Sigmoid colon (tissue), 7 donors: ENCODE measurements at regions of chr1 and their contacts with region 1.

Region 1: GRCh38 chr1:101025657-101026504 is at the start of gene DPH5:
- DNase-seq: peak; percentile 91
- H3K4me3 ChIP-seq: peak within 1 kb of the TSS; percentile 52 to 69 (median 61)
- H3K27ac ChIP-seq: peak within 1 kb of the TSS; percentile 76 to 85 (median 83)
- H3K4me1 ChIP-seq: peaks cover 0 to 22% (median 13%) of the 10 kb centered on the region in 4 donors
- H3K27me3 ChIP-seq: no peaks in the 10 kb centered on the region
- CTCF ChIP-seq: no peak
- EP300 ChIP-seq: no peak
- POLR2A ChIP-seq: peak; percentile 50 to 52
- total RNA-seq, gene DPH5: 24.5 to 38.5 (median 33.7) TPM

Region 2: GRCh38 chr1:100895540-100896483 is 130.1 kb before region 1 on chr1 and contains the start of gene SLC30A7:
- intact Hi-C with region 1: loop called (anchors 5 kb)
- DNase-seq: peak; percentile 96
- H3K4me3 ChIP-seq: peak within 1 kb of the TSS; percentile 60 to 85 (median 72)
- H3K27ac ChIP-seq: peak within 1 kb of the TSS; percentile 89 to 97 (median 93)
- H3K4me1 ChIP-seq: peaks cover 0 to 31% (median 18%) of the 10 kb centered on the region in 4 donors
- H3K27me3 ChIP-seq: no peaks in the 10 kb centered on the region
- CTCF ChIP-seq: no peak
- EP300 ChIP-seq: no peak
- POLR2A ChIP-seq: peak; percentile 38 to 63
- total RNA-seq, gene SLC30A7: 10.9 to 16.7 (median 14.1) TPM

Region 3: DNA sequence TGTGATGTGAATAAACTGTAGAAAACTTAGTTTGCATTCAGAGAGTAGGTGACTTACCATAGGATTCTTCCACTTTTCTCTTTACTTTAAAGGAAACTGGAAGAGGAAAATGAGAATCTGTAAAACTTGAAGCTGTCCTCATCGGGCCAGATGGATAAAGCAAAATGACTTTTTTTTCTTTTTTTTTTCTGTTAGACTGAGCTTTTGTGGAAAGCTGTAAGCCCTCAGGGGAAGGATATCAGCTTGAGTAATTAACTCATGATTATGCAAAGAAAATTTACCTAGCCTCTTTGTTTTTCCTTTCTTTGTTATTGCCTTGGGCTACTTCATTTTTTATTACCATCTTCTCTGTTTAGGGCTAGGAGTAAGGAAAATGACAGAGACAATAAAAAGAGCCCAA is 53.7 kb before region 1 on chr1:
- intact Hi-C with region 1: no loop called
- DNase-seq: no peak
- H3K4me3 ChIP-seq: no peak overlapping the region
- H3K27ac ChIP-seq: no peak overlapping the region
- H3K4me1 ChIP-seq: no peaks in the 10 kb centered on the region
- H3K27me3 ChIP-seq: no peaks in the 10 kb centered on the region
- CTCF ChIP-seq: no peak
- EP300 ChIP-seq: no peak
- POLR2A ChIP-seq: no peak